Naive thymus-derived CD4-positive, alpha-beta T cell (primary cell): ENCODE measurements at regions of chr10 and their contacts with region 1.

Region 1: DNA sequence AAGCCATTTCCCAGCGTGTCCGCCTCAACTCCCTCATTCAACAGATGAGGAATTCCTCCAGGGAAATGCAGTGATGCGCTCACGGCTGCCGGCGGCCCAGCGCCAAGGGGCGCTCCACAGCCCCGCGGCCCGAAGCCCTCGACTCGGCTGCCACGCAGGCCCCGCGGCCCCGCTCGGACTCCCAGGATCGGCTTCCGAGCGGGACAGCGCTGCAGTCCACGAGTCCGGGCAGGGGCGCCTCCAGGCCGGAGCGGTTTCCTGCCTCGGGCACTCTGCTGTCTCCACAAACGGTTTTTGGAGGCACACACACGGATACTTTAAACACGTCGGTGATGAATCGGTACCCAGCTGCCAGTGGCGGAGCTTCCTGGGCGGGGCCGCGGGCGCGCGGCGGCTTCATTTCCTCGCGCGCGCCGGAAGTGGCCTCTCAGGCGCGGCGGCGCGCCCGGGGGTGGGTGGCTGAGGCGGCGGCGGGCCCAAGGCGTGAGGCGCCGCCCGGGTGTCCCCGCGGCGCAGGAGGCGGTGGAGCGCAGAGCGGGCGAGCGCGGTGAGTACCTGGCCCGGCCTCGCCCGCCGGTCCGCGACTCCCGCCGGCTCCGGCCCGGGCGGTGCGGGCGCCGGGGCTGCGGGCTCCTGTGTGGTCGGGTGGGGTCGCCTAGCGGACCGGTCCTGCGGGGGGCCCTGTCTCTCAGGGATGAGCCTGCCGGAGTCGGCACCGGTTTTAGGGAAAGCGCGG is at the start of gene CSGALNACT2:
- DNase-seq: peak; percentile 82 to 92 (median 89)
- ATAC-seq: peak; percentile 86
- H3K4me3 ChIP-seq: peak within 1 kb of the TSS; percentile 83
- H3K4me3 Mint-ChIP-seq: peak within 1 kb of the TSS; percentile 93 to 100 (median 98)
- H3K27ac ChIP-seq: peak within 1 kb of the TSS; percentile 93
- H3K27ac Mint-ChIP-seq: peak within 1 kb of the TSS; percentile 95 to 100 (median 99)
- H3K4me1 ChIP-seq: peaks cover 24 to 25% of the 10 kb centered on the region in 2 donors
- H3K4me1 Mint-ChIP-seq: peaks cover 40 to 70% (median 57%) of the 10 kb centered on the region in 7 donors
- H3K27me3 ChIP-seq: no peaks in the 10 kb centered on the region
- H3K27me3 Mint-ChIP-seq: peaks cover 0 to 2% (median 0%) of the 10 kb centered on the region in 5 donors
- total RNA-seq, gene CSGALNACT2: 47.3 to 57.5 (median 52.3) TPM

Region 2: GRCh38 chr10:42638055-42638820 is 500.0 kb before region 1 on chr10 and contains the start of gene ZNF33B:
- CTCF ChIA-PET with region 1: no interaction called
- POLR2A ChIA-PET with region 1: interaction called, 3 read pairs
- intact Hi-C with region 1: loop called (anchors 1 to 5 kb)
- DNase-seq: peak; percentile 84 to 97 (median 94)
- ATAC-seq: peak; percentile 96
- H3K4me3 ChIP-seq: peak within 1 kb of the TSS; percentile 98
- H3K4me3 Mint-ChIP-seq: peak within 1 kb of the TSS; percentile 86 to 99 (median 97)
- H3K27ac ChIP-seq: peak within 1 kb of the TSS; percentile 84
- H3K27ac Mint-ChIP-seq: peak within 1 kb of the TSS; percentile 95 to 99 (median 97)
- H3K4me1 ChIP-seq: peaks cover 6 to 14% of the 10 kb centered on the region in 2 donors
- H3K4me1 Mint-ChIP-seq: peaks cover 29 to 62% (median 45%) of the 10 kb centered on the region in 7 donors
- H3K27me3 ChIP-seq: no peaks in the 10 kb centered on the region
- H3K27me3 Mint-ChIP-seq: no peaks in the 10 kb centered on the region
- total RNA-seq, gene ZNF33B: 26.3 to 77.1 (median 34.8) TPM

Region 3: DNA sequence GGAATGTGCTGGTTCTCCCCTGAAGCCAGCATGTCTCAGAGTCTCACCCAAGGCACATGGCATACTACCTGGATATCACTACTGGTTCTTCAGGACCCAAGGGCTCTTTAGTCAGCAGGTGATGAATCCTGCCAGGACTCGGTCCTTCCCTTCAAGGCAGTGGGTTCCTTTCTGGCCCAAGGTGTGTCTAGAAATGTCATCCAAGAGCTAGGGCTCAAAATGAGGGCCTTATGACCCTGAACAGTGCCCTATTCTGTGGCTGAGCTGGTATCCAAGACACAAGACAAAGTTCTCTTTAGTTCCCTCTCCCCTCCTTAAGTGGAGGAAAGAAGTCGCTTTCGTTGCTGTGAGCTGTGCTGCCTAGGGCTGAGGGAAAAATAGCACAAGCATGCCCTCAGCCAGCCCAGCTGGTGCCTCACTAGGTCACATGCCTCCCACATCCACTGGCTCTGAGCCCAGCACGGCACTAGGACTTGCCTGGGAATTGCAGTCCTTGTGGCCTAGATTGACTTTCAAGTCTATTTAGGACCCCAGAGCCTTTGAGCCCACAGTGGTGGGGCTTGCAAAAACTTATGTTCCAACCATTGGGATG is 249.6 kb before region 1 on chr10:
- CTCF ChIA-PET with region 1: no interaction called
- POLR2A ChIA-PET with region 1: no interaction called
- intact Hi-C with region 1: no loop called
- DNase-seq: no peak
- ATAC-seq: no peak
- H3K4me3 ChIP-seq: no peak overlapping the region
- H3K4me3 Mint-ChIP-seq: no peak overlapping the region
- H3K27ac ChIP-seq: no peak overlapping the region
- H3K27ac Mint-ChIP-seq: no peak overlapping the region
- H3K4me1 ChIP-seq: no peaks in the 10 kb centered on the region
- H3K4me1 Mint-ChIP-seq: no peaks in the 10 kb centered on the region
- H3K27me3 ChIP-seq: no peaks in the 10 kb centered on the region
- H3K27me3 Mint-ChIP-seq: peaks cover 0 to 18% (median 6%) of the 10 kb centered on the region in 5 donors

Region 4: DNA sequence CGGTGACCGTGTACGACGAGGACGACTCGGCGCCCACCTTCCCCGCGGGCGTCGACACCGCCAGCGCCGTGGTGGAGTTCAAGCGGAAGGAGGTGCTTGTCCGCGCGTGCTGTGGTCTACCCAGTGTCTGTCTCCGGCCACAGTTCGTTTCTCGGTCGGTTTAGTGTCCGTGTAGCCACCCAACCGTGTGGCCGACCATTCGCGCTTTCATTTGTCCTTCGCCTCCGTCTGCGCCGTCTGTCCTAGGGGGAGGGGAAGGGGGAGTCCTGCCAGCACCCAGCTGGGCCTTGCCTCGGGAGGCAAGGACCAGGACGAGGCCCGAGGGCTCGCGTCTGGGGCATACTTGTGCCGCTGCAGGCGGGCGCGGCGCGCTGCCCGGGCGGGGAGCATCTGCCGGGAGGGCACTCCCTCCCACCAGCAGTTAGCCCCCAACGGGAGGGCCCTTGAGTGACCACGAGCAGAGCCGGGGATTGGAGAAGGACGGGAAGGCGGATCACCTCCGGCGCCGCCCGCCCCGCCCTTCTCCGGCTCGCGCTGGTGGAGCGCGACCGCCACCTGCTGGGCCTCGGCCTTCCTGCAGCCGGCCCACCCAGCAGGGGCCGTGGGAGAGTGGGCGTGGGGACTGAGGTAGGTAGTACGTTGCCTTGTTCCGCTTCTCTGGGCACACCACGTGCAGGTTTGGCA is 32.9 kb before region 1 on chr10:
- CTCF ChIA-PET with region 1: no interaction called
- POLR2A ChIA-PET with region 1: no interaction called
- intact Hi-C with region 1: loop called (anchors 1 kb)
- DNase-seq: peak; percentile 48 to 91 (median 75)
- ATAC-seq: peak; percentile 95
- H3K4me3 ChIP-seq: peak overlapping the region; percentile 60
- H3K4me3 Mint-ChIP-seq: peak overlapping the region; percentile 61 to 85 (median 76)
- H3K27ac ChIP-seq: no peak overlapping the region
- H3K27ac Mint-ChIP-seq: peak overlapping the region in 1 of 9 donors; percentile 49
- H3K4me1 ChIP-seq: peaks cover 0 to 8% of the 10 kb centered on the region in 2 donors
- H3K4me1 Mint-ChIP-seq: peaks cover 0 to 15% (median 7%) of the 10 kb centered on the region in 7 donors
- H3K27me3 ChIP-seq: no peaks in the 10 kb centered on the region
- H3K27me3 Mint-ChIP-seq: peaks cover 15 to 26% (median 26%) of the 10 kb centered on the region in 5 donors

Region 5: GRCh38 chr10:43160046-43160918 is 22.1 kb after region 1 on chr10:
- CTCF ChIA-PET with region 1: no interaction called
- POLR2A ChIA-PET with region 1: interaction called, 5 read pairs
- intact Hi-C with region 1: loop called (anchors 1 to 2 kb)
- DNase-seq: no peak
- ATAC-seq: peak; percentile 76
- H3K4me3 ChIP-seq: no peak overlapping the region
- H3K4me3 Mint-ChIP-seq: no peak overlapping the region
- H3K27ac ChIP-seq: no peak overlapping the region
- H3K27ac Mint-ChIP-seq: peak overlapping the region in 5 of 9 donors; percentile 1 to 63 (median 35)
- H3K4me1 ChIP-seq: peaks cover 7 to 9% of the 10 kb centered on the region in 2 donors
- H3K4me1 Mint-ChIP-seq: peaks cover 34 to 61% (median 56%) of the 10 kb centered on the region in 7 donors
- H3K27me3 ChIP-seq: no peaks in the 10 kb centered on the region
- H3K27me3 Mint-ChIP-seq: no peaks in the 10 kb centered on the region

Region 6: GRCh38 chr10:43292755-43293676 is 154.8 kb after region 1 on chr10:
- CTCF ChIA-PET with region 1: no interaction called
- POLR2A ChIA-PET with region 1: interaction called, 11 read pairs
- intact Hi-C with region 1: loop called in 1 of 2 experiments (anchors 5 kb)
- DNase-seq: peak in 6 of 9 donors; percentile 22 to 51 (median 44)
- ATAC-seq: peak; percentile 72
- H3K4me3 ChIP-seq: no peak overlapping the region
- H3K4me3 Mint-ChIP-seq: peak overlapping the region; percentile 13 to 75 (median 55)
- H3K27ac ChIP-seq: no peak overlapping the region
- H3K27ac Mint-ChIP-seq: peak overlapping the region in 6 of 9 donors; percentile 65 to 84 (median 78)
- H3K4me1 ChIP-seq: peaks cover 31 to 35% of the 10 kb centered on the region in 2 donors
- H3K4me1 Mint-ChIP-seq: peaks cover 16 to 83% (median 34%) of the 10 kb centered on the region in 7 donors
- H3K27me3 ChIP-seq: no peaks in the 10 kb centered on the region
- H3K27me3 Mint-ChIP-seq: peaks cover 0 to 15% (median 6%) of the 10 kb centered on the region in 5 donors

Region 7: DNA sequence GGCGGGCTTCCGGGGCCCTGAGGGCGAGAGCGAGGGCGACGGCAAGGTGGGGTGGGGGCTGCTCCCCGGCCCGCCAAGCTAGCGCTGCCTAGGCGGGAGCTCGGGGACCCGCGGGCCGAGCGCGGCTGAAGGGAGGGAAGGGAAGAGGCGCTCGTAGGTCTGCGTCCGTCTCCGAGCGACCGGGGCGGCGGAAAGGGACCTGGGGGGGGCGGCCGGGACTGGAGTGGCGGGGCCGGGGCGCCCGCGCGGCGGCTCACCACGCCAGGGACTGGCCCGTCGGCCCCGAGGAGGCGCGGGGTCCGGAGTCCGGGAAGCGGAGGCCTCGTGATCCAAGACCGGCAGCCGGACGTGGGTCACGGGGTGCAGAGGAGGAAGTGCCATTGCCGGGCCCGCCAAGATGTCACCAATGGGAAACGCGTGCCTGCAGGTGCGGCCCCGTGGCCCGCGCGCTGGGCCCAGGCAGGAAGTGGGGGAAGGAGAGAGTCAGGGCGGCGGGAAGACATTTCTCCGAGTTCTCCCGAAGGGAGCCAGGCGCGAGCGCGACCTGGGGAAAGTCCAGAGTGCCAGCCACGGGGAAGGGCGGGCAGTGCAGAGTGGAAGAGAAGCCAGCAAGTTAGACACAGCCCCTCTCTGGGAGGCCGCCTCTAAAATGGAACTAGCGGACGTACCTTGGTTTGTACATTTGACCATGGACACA is 258.9 kb after region 1 on chr10:
- CTCF ChIA-PET with region 1: no interaction called
- POLR2A ChIA-PET with region 1: no interaction called
- intact Hi-C with region 1: loop called in 1 of 2 experiments (anchors 2 kb)
- DNase-seq: peak; percentile 61 to 85 (median 68)
- ATAC-seq: peak; percentile 78
- H3K4me3 ChIP-seq: peak overlapping the region; percentile 70
- H3K4me3 Mint-ChIP-seq: peak overlapping the region; percentile 90 to 100 (median 94)
- H3K27ac ChIP-seq: peak overlapping the region; percentile 89
- H3K27ac Mint-ChIP-seq: peak overlapping the region; percentile 87 to 99 (median 97)
- H3K4me1 ChIP-seq: peaks cover 55 to 66% of the 10 kb centered on the region in 2 donors
- H3K4me1 Mint-ChIP-seq: peaks cover 67 to 93% (median 81%) of the 10 kb centered on the region in 7 donors
- H3K27me3 ChIP-seq: no peaks in the 10 kb centered on the region
- H3K27me3 Mint-ChIP-seq: no peaks in the 10 kb centered on the region

Region 8: GRCh38 chr10:43574001-43574892 is 436.1 kb after region 1 on chr10 and contains the start of gene ZNF239:
- CTCF ChIA-PET with region 1: no interaction called
- POLR2A ChIA-PET with region 1: no interaction called
- intact Hi-C with region 1: loop called in 1 of 2 experiments (anchors 1 kb)
- DNase-seq: peak; percentile 62 to 82 (median 78)
- ATAC-seq: peak; percentile 91
- H3K4me3 ChIP-seq: peak within 1 kb of the TSS; percentile 72
- H3K4me3 Mint-ChIP-seq: peak within 1 kb of the TSS; percentile 72 to 93 (median 90)
- H3K27ac ChIP-seq: peak within 1 kb of the TSS; percentile 66
- H3K27ac Mint-ChIP-seq: peak within 1 kb of the TSS; percentile 29 to 96 (median 93)
- H3K4me1 ChIP-seq: peaks cover 14 to 19% of the 10 kb centered on the region in 2 donors
- H3K4me1 Mint-ChIP-seq: peaks cover 28 to 64% (median 61%) of the 10 kb centered on the region in 7 donors
- H3K27me3 ChIP-seq: no peaks in the 10 kb centered on the region
- H3K27me3 Mint-ChIP-seq: peaks cover 0 to 3% (median 0%) of the 10 kb centered on the region in 5 donors
- total RNA-seq, gene ZNF239: 1.7 to 8.5 (median 2.3) TPM